Endothelial cell of umbilical vein (primary cell): ENCODE measurements at regions of chr18 and their contacts with region 1.

Region 1: DNA sequence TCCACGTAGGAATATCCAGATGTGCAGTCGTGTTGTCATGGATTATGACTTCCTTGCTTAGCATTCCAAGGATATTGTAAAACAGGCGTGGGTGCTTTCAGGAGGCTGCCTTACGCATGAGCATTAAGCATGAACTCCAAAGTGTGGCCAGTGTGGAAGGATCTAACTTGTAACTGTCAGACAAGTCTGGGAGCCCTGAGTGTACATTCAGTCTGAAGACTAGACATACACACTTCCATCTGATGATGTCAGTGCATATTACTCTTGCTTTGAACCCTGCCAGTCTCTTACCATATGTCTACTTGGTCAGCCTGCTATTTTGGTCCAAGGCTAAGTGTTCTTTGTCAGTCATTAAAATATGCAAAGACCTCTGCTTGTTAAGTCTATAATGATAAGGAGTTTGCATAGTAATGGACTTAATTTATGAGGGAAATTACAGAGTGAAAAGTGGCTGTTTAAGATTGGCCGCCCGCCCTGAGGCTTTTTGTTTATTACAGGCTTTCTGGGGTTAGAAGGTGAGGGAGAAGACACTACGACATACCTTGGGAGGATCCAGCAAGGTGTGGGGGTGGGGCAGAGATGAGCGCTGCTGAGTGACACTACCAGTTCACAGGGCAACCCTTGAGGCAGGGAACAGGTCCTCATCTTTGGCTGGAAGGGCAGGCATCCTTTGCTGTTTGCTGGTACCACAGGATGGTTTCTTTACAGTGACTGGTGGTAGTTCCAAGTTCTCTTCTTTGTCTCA is 48.3 kb downstream of the CABLES1 start:
- DNase-seq: no peak
- H3K4me3 ChIP-seq: no peak overlapping the region
- H3K27ac ChIP-seq: no peak overlapping the region
- H3K4me1 ChIP-seq: peaks cover 23% of the 10 kb centered on the region
- H3K27me3 ChIP-seq: no peaks in the 10 kb centered on the region
- CTCF ChIP-seq: no peak
- POLR2A ChIP-seq: no peak

Region 2: DNA sequence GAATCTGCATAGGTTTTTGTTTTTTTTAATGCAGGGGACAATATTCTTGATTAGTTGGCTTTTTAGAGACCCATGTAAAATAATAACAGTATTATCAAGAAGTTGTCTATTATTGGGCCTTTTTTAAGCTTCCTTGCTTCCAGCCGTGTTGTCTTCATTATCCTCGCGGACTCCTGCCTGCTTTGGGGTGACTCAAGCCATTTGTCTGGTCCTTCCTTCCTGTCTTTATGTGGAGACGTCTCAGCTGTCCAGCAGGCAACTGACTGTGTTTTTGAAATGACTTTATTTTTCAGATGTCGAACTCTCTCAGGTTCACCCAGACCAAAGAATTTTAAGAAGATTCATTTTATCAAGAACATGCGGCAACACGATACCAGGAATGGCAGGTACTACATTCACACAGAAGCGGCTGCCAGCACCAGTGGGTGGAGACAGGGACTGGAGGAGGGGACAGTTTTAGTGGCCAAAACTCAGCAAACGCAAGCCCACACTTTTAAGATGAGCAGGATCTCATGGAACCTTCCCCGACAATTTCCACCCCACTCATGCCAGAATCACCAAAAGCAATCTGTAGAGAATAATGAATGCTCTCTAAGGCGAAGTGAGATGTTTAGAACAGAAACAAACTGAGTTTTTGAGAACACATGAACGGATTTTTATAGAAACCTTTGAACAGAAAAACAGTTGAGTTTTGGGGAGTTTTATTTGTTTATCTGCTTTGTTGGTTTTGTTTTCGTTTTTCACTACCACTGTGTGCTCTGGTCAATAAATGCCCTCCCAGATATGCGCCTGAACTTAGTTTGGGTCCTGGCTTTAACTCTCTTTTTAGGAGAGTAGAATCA is 10.8 kb after region 1 on chr18:
- CTCF ChIA-PET with region 1: interaction called, 5 read pairs
- POLR2A ChIA-PET with region 1: no interaction called
- dilution Hi-C with region 1: no loop called
- intact Hi-C with region 1: loop called (anchors 1 kb)
- DNase-seq: peak; percentile 44
- H3K4me3 ChIP-seq: no peak overlapping the region
- H3K27ac ChIP-seq: peak overlapping the region; percentile 49
- H3K4me1 ChIP-seq: peaks cover 35% of the 10 kb centered on the region
- H3K27me3 ChIP-seq: no peaks in the 10 kb centered on the region
- CTCF ChIP-seq: no peak
- POLR2A ChIP-seq: no peak